ENCODE measurements at regions of chr5 and their contacts with region 1.

Region 1: GRCh38 chr5:90474235-90475109 is at the starts of genes MBLAC2 and POLR3G:
- DNase-seq: peak; percentile 90
- ATAC-seq: peak; percentile 86
- H3K4me3 Mint-ChIP-seq: peak within 1 kb of the TSS; percentile 98
- H3K27ac Mint-ChIP-seq: peak within 1 kb of the TSS; percentile 96
- H3K4me1 Mint-ChIP-seq: peaks cover 31% of the 10 kb centered on the region
- H3K27me3 Mint-ChIP-seq: no peaks in the 10 kb centered on the region
- total RNA-seq, gene MBLAC2: 7.4 to 8.3 TPM
- total RNA-seq, gene POLR3G: 2.8 to 3.7 TPM

Region 2: DNA sequence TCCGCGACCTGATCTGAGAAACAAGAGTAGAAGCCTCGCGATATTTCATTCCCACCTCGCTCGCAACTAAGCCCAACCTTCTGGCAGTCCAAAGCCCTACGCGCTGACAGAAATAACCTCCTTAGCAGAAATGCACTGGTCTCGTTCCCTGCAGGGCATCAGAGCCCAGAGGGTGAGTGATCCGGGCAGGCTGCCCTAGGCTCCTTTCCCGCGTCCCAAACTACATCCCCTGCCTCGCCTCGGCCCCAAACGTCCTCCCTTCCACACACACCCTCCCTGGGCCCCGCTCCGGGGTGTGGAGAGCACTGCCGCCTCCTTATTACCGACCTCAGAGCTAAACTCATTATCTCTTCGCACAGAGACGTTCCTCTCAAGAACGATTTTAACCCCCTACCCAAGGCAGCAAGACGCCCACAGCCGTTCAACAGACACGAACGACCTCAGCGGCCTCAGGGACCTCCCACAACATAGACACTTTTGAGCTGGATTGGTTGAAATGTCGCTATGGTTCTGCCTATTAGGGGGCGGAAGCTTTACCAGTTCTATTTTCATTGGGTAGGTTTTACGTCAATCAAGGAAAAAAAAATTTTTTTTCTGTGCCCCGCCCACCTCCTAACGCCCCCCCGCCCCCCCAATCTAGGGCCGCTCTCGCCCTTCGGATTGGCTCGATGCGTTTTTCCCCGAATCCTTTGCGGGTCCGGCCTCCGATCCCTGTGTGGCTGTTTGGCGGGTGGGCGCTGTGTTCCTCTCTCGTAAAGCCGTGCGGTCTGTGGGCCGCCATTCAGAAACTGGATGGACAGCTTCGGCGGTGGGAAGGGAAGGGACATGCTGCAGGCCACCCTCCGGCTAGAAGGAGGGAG is 64.9 kb before region 1 on chr5 and contains the start of gene CETN3:
- POLR2A ChIA-PET with region 1: interaction called, 34 read pairs
- DNase-seq: peak; percentile 85
- ATAC-seq: peak; percentile 94
- H3K4me3 Mint-ChIP-seq: no peak within 1 kb of the TSS
- H3K27ac Mint-ChIP-seq: no peak within 1 kb of the TSS
- H3K4me1 Mint-ChIP-seq: peaks cover 13% of the 10 kb centered on the region
- H3K27me3 Mint-ChIP-seq: no peaks in the 10 kb centered on the region
- total RNA-seq, gene CETN3: 24.3 to 28.7 TPM

Measured in activated naive CD8-positive, alpha-beta T cell treated with anti-CD3 and anti-CD28 coated beads, Interleukin-2, amount 10 ng/mL, durations not matched to agents 7 days and 5 days (primary cell).